BJ (cell line): ENCODE measurements at regions of chrX and their contacts with region 1.

Region 1: GRCh38 chrX:139971394-139971749 is 6.1 kb upstream of the CXorf66 start:
- DNase-seq: no peak
- H3K4me3 ChIP-seq: no peak overlapping the region
- H3K27me3 ChIP-seq: no peaks in the 10 kb centered on the region
- CTCF ChIP-seq: no peak

Region 2: GRCh38 chrX:139739138-139739537 is 232.2 kb before region 1 on chrX:
- CTCF ChIA-PET with region 1: no interaction called
- POLR2A ChIA-PET with region 1: interaction called, 22 read pairs
- DNase-seq: peak; percentile 30
- H3K4me3 ChIP-seq: no peak overlapping the region
- H3K27me3 ChIP-seq: no peaks in the 10 kb centered on the region
- CTCF ChIP-seq: no peak